ENCODE measurements at regions of chr15 and their contacts with region 1.

Region 1: GRCh38 chr15:78108299-78109084 is 16.1 kb downstream of the SH2D7 start:
- DNase-seq: peak; percentile 78 to 94 (median 83)
- ATAC-seq: peak; percentile 86
- H3K4me3 ChIP-seq: no peak overlapping the region
- H3K4me3 Mint-ChIP-seq: no peak overlapping the region
- H3K27ac ChIP-seq: no peak overlapping the region
- H3K27ac Mint-ChIP-seq: no peak overlapping the region
- H3K4me1 ChIP-seq: peaks cover 37% of the 10 kb centered on the region
- H3K4me1 Mint-ChIP-seq: peaks cover 35% of the 10 kb centered on the region
- H3K27me3 ChIP-seq: no peaks in the 10 kb centered on the region
- H3K27me3 Mint-ChIP-seq: no peaks in the 10 kb centered on the region
- CTCF ChIP-seq: peak; percentile 88

Region 2: DNA sequence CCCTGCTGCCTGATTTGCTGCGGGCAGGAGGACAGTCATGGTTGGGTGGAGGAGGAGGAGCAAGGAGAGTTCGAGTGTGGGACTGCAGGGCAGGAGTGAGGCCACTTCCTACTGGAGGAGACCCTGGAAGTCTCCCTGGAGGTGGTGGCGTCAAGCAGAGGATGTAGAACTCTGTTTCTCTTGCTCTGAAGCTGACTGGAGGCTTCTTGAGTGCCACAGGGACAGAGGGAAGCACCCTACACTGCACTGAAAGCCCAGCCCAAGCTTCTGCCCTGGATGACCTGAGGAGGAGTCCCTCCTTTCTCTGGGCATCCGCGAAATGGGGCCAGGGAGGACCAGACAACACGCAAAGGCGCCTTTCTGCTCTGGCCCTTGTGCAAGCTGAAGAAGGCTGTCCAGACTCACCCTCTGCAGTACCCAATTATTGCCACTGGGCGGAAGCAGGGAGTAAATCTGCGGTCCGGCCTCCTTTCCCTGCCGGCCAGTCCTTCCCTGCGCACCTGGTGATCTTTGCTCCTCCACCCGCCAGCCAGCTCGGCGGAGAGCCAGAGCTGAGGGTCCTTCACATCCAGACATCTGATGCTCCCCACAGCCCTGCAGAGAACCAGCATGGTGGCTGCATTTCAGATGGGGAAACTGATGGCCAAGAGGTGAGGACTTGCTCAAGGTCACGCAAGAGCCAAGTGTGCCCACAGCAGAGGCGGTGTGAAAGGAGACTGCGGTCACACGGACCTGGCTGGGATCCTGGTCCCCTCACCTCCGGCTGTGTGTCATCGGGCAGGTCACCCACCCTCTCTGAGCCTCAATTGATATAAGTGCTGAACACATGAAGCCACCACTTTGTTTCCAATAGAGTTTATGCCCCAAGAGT is 238.1 kb before region 1 on chr15:
- CTCF ChIA-PET with region 1: no interaction called
- POLR2A ChIA-PET with region 1: no interaction called
- intact Hi-C with region 1: no loop called
- DNase-seq: peak in 11 of 14 experiments; percentile 3 to 51 (median 25)
- ATAC-seq: no peak
- H3K4me3 ChIP-seq: no peak overlapping the region
- H3K4me3 Mint-ChIP-seq: no peak overlapping the region
- H3K27ac ChIP-seq: no peak overlapping the region
- H3K27ac Mint-ChIP-seq: no peak overlapping the region
- H3K4me1 ChIP-seq: peaks cover 5% of the 10 kb centered on the region
- H3K4me1 Mint-ChIP-seq: no peaks in the 10 kb centered on the region
- H3K27me3 ChIP-seq: no peaks in the 10 kb centered on the region
- H3K27me3 Mint-ChIP-seq: no peaks in the 10 kb centered on the region
- CTCF ChIP-seq: peak; percentile 35

Region 3: DNA sequence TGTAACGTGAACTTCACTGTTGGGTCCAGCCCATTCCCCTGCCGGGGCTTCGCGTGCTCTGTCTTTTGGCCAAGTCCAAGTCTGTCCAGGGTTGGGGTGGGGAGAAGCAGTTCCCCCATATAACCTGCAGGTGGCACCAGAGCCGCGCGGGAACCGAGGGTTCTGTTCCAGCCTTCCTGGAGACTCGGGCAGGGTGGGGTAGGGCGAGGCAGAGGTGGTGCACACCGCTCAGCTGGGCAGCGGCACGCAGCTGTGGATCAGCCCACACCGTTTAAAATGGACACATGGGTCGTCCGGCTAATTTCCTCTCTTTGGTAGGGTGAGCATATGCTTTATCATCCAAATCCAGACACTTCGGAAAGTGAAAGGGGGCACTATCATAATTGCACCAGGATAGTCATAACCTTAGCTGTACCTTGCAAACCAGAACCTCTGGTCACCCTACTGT is 149.0 kb before region 1 on chr15:
- CTCF ChIA-PET with region 1: interaction called, 25 read pairs
- POLR2A ChIA-PET with region 1: interaction called, 5 read pairs
- intact Hi-C with region 1: loop called (anchors 1 kb)
- DNase-seq: peak; percentile 52 to 81 (median 68)
- ATAC-seq: peak; percentile 99
- H3K4me3 ChIP-seq: no peak overlapping the region
- H3K4me3 Mint-ChIP-seq: no peak overlapping the region
- H3K27ac ChIP-seq: no peak overlapping the region
- H3K27ac Mint-ChIP-seq: no peak overlapping the region
- H3K4me1 ChIP-seq: peaks cover 6% of the 10 kb centered on the region
- H3K4me1 Mint-ChIP-seq: no peaks in the 10 kb centered on the region
- H3K27me3 ChIP-seq: no peaks in the 10 kb centered on the region
- H3K27me3 Mint-ChIP-seq: no peaks in the 10 kb centered on the region
- CTCF ChIP-seq: peak; percentile 93

Region 4: GRCh38 chr15:78000091-78000926 is 108.2 kb before region 1 on chr15:
- CTCF ChIA-PET with region 1: interaction called, 57 read pairs
- POLR2A ChIA-PET with region 1: interaction called, 10 read pairs
- intact Hi-C with region 1: loop called (anchors 1 kb)
- DNase-seq: peak; percentile 64 to 91 (median 78)
- ATAC-seq: peak; percentile 100
- H3K4me3 ChIP-seq: no peak overlapping the region
- H3K4me3 Mint-ChIP-seq: no peak overlapping the region
- H3K27ac ChIP-seq: no peak overlapping the region
- H3K27ac Mint-ChIP-seq: peak overlapping the region; percentile 45
- H3K4me1 ChIP-seq: peaks cover 14% of the 10 kb centered on the region
- H3K4me1 Mint-ChIP-seq: peaks cover 11% of the 10 kb centered on the region
- H3K27me3 ChIP-seq: no peaks in the 10 kb centered on the region
- H3K27me3 Mint-ChIP-seq: no peaks in the 10 kb centered on the region
- CTCF ChIP-seq: peak; percentile 70

Region 5: DNA sequence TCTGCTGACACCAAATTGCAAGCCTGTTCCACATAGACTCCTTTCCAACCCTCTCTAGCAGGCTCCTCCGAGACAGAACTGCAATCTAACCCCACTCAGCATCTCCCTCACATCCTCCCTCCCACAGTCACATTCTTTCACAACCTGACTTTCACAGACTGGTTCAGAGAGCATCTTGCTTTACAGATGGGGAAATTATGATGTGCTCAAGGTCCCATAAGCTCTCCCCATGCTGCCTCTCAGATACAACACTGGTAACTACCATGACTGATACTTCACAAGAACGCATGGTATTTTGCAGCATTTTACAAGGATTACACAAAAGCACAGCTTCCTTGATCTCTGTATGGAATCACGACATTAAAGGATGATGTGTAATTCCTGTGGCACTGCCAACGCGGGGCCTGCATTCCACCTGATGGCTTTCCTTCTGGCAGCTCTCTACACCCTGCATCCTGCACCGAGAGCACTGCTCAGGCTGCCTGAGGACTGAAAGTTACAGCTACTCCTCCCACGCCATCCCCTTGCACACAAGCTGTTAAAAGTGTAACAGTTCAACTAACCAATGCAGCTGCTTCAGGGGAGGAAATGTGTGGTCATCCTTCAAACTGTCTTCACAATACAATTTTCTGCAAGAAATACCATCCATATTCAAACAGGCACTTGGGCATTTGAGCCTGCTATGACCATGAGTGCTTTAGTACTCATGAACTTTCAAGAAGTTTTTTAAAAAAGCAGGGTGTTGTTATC is 58.6 kb before region 1 on chr15:
- CTCF ChIA-PET with region 1: interaction called, 26 read pairs
- POLR2A ChIA-PET with region 1: interaction called, 4 read pairs
- intact Hi-C with region 1: no loop called
- DNase-seq: peak in 8 of 14 experiments; percentile 25 to 79 (median 45)
- ATAC-seq: peak; percentile 47
- H3K4me3 ChIP-seq: peak overlapping the region; percentile 16
- H3K4me3 Mint-ChIP-seq: peak overlapping the region; percentile 76
- H3K27ac ChIP-seq: peak overlapping the region; percentile 78 to 83
- H3K27ac Mint-ChIP-seq: peak overlapping the region; percentile 84
- H3K4me1 ChIP-seq: peaks cover 89% of the 10 kb centered on the region
- H3K4me1 Mint-ChIP-seq: peaks cover 98% of the 10 kb centered on the region
- H3K27me3 ChIP-seq: no peaks in the 10 kb centered on the region
- H3K27me3 Mint-ChIP-seq: no peaks in the 10 kb centered on the region
- CTCF ChIP-seq: no peak

Region 6: DNA sequence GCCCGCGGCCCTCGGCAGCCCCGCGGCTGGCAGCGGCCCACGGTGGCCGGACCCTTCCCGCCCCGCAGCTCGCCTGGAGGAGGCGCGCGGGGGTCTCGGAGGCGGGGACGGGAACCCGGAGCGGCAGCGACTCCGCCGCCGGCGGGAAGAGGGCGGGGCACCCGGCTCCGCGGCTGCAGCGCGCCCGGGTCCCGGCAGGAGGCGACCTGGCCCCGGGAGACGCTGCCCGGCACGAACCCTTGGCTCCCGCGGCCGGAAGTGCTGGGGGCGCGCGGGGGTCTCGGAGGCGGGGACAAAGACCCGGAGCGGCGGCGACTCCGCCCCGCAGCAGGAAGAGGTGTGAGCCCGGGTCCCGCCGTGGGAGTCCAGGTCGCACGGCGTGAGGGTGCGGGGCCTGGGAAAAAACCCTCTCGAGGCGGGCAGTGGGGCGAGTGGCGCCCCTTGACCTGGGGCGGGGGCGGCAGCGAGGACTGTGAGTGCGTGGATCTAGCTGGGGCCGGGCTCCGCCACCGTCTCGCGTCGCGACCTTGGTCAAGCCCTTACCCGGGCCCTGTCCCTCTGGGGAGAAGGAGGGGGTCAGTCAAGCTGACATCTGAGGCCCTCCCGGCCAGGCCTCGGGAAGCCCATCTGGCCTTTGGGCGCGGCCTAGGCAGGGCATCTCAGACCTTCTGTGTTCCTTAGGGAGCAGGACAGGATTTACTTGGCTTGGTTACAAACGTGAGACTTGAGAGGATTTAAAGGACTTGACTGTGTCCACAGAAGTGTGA is 23.0 kb after region 1 on chr15 and contains the start of gene CIB2:
- CTCF ChIA-PET with region 1: interaction called, 9 read pairs
- POLR2A ChIA-PET with region 1: no interaction called
- intact Hi-C with region 1: loop called in 1 of 2 experiments (anchors 2 kb)
- DNase-seq: peak; percentile 46 to 89 (median 72)
- ATAC-seq: peak; percentile 89
- H3K4me3 ChIP-seq: peak within 1 kb of the TSS; percentile 91
- H3K4me3 Mint-ChIP-seq: peak within 1 kb of the TSS; percentile 89
- H3K27ac ChIP-seq: peak within 1 kb of the TSS; percentile 39 to 86
- H3K27ac Mint-ChIP-seq: peak within 1 kb of the TSS; percentile 73
- H3K4me1 ChIP-seq: peaks cover 18% of the 10 kb centered on the region
- H3K4me1 Mint-ChIP-seq: peaks cover 27% of the 10 kb centered on the region
- H3K27me3 ChIP-seq: no peaks in the 10 kb centered on the region
- H3K27me3 Mint-ChIP-seq: no peaks in the 10 kb centered on the region
- CTCF ChIP-seq: peak; percentile 66
- total RNA-seq, gene CIB2: 0.82 to 1.7 TPM

Region 7: DNA sequence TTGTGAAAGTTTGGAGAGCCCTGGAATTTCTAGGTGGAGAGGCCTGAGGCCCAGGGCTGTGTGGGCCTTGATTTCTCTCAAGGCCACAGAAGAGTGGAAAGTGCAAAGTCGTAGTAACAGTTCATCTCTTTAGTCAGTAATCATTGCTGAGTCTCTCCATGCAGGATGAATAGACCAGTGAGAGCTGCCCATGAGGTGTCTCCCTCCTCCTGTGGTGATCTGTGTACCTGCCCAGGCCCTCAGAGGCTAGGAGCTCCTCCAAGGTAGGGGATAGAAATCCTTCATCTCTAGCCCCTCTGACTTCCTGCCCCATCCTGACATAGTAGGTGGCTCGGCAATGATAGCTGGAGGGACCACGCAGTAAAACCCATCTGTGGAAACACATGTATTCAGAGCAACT is 33.8 kb after region 1 on chr15:
- CTCF ChIA-PET with region 1: no interaction called
- POLR2A ChIA-PET with region 1: no interaction called
- intact Hi-C with region 1: no loop called
- DNase-seq: no peak
- ATAC-seq: no peak
- H3K4me3 ChIP-seq: no peak overlapping the region
- H3K4me3 Mint-ChIP-seq: no peak overlapping the region
- H3K27ac ChIP-seq: no peak overlapping the region
- H3K27ac Mint-ChIP-seq: no peak overlapping the region
- H3K4me1 ChIP-seq: no peaks in the 10 kb centered on the region
- H3K4me1 Mint-ChIP-seq: peaks cover 2% of the 10 kb centered on the region
- H3K27me3 ChIP-seq: no peaks in the 10 kb centered on the region
- H3K27me3 Mint-ChIP-seq: no peaks in the 10 kb centered on the region
- CTCF ChIP-seq: no peak

Region 8: DNA sequence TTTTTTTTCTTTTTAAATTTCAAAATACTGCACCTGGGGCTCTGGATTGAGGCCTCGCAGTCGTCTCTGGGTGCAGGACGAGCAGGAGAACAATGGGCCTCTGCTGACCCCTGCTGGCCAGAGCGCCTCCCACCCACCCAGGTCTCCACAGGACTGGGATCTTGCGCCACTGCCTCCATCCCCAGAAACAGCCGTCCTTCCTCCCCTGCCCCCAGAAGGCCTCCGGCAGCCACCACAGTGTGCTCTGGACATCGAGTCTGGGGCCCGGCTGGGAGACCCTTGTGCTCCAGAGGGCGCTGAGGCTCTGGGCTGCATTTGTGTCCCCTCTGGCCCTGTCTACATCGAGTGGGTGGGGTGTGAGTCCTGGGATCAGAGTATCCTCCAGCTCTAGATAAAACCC is 132.5 kb after region 1 on chr15:
- CTCF ChIA-PET with region 1: interaction called, 27 read pairs
- POLR2A ChIA-PET with region 1: no interaction called
- intact Hi-C with region 1: loop called (anchors 1 kb)
- DNase-seq: peak; percentile 67 to 89 (median 80)
- ATAC-seq: peak; percentile 92
- H3K4me3 ChIP-seq: no peak overlapping the region
- H3K4me3 Mint-ChIP-seq: no peak overlapping the region
- H3K27ac ChIP-seq: no peak overlapping the region
- H3K27ac Mint-ChIP-seq: no peak overlapping the region
- H3K4me1 ChIP-seq: peaks cover 5% of the 10 kb centered on the region
- H3K4me1 Mint-ChIP-seq: peaks cover 4% of the 10 kb centered on the region
- H3K27me3 ChIP-seq: no peaks in the 10 kb centered on the region
- H3K27me3 Mint-ChIP-seq: no peaks in the 10 kb centered on the region
- CTCF ChIP-seq: peak; percentile 74

Region 9: GRCh38 chr15:78325092-78325843 is 216.8 kb after region 1 on chr15:
- CTCF ChIA-PET with region 1: no interaction called
- POLR2A ChIA-PET with region 1: no interaction called
- intact Hi-C with region 1: no loop called
- DNase-seq: no peak
- ATAC-seq: no peak
- H3K4me3 ChIP-seq: no peak overlapping the region
- H3K4me3 Mint-ChIP-seq: no peak overlapping the region
- H3K27ac ChIP-seq: no peak overlapping the region
- H3K27ac Mint-ChIP-seq: no peak overlapping the region
- H3K4me1 ChIP-seq: no peaks in the 10 kb centered on the region
- H3K4me1 Mint-ChIP-seq: no peaks in the 10 kb centered on the region
- H3K27me3 ChIP-seq: no peaks in the 10 kb centered on the region
- H3K27me3 Mint-ChIP-seq: no peaks in the 10 kb centered on the region
- CTCF ChIP-seq: no peak

Region 10: DNA sequence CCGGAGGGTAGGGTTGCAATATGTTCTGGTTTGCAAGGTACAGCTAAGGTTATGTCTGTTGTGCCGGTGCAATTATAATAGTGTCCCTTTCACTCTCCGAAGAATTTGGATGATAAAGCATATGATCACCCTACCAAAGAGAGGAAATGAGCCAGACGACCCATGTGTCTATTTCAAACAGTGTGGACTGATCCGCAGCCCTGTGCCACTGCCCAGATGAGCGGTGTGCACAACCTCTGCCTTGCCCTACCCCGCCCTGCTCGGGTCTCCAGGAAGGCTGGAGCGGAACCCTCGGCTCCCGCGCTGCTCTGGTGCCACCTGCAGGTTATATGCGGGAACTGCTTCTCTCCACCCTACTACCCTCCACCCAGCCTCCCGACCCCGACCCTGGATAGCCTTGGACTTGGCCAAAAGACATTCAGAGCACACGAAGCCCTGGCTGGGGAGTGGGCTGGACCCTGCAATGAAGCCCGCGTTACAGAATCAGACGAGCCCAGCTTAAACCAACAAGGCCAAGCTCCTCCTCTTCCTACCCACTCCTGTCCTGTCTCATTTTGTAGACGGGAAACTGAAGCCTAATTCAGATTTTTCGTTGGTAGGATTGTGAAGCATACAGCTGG is 600.9 kb after region 1 on chr15:
- CTCF ChIA-PET with region 1: no interaction called
- POLR2A ChIA-PET with region 1: no interaction called
- intact Hi-C with region 1: loop called (anchors 1 to 2 kb)
- DNase-seq: peak; percentile 44 to 76 (median 53)
- ATAC-seq: peak; percentile 87
- H3K4me3 ChIP-seq: no peak overlapping the region
- H3K4me3 Mint-ChIP-seq: no peak overlapping the region
- H3K27ac ChIP-seq: no peak overlapping the region
- H3K27ac Mint-ChIP-seq: no peak overlapping the region
- H3K4me1 ChIP-seq: peaks cover 5% of the 10 kb centered on the region
- H3K4me1 Mint-ChIP-seq: peaks cover 4% of the 10 kb centered on the region
- H3K27me3 ChIP-seq: peaks cover 5 to 25% of the 10 kb centered on the region in 2 experiments
- H3K27me3 Mint-ChIP-seq: peaks cover 46% of the 10 kb centered on the region
- CTCF ChIP-seq: peak; percentile 76